ENCODE measurements at regions of chr11 and their contacts with region 1.

Region 1: DNA sequence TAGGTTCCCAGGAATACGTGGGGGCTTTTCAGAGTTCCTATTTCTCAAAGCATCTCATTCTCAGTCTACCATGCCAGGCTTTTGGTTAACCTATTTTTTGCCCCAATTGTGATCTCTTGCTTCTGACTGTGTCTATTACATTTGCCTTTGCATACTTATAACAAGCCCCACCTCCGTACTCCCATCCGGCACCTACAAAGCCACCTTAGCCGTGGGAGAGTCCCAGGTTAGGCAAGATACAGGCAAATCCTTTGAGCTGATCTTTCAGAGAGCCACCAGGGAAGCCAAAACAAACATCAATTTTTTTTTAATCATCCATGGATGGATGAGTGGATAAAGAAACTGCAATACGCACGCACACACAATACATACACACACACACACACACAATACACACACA is 18.6 kb upstream of the PANX3 start:
- DNase-seq: no peak
- H3K4me3 ChIP-seq: no peak overlapping the region
- CTCF ChIP-seq: no peak
- POLR2A ChIP-seq: no peak

Region 2: DNA sequence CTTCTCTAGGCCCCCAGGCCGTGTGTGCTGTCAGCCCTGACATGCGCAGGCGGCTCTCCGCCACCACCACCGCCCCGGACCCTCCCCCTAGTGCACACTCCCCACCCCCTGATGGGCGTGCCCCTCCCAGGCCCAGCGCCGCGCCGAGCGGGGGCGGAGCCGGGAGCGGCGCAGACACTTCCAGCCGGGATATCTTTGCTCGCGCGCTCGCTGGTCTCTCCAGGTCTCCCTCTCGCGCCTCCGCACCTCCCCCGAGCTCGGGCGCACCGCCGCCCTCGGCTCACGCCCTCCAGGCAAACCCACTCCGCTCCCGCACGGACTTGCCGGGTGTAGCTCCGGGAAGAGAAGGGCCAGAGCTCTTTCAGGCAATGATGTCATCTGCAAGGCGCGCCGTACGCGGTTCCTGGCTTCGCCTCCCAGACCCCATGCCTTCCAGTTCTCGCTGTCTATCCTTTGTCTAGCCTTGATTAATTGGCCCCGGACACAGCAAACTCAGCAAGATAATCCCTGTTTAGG is 938.0 kb before region 1 on chr11 and contains the start of gene SCN3B:
- intact Hi-C with region 1: loop called (anchors 5 kb)
- DNase-seq: peak in 1 of 2 donors; percentile 88
- H3K4me3 ChIP-seq: peak within 1 kb of the TSS; percentile 35
- CTCF ChIP-seq: no peak
- POLR2A ChIP-seq: no peak
- total RNA-seq, gene SCN3B: 0.51 to 5.1 (median 0.92) TPM